Activated CD4-positive, alpha-beta memory T cell treated with anti-CD3 and anti-CD28 coated beads, Interleukin-2, amount 10 ng/mL, durations not matched to agents 7 days and 5 days (primary cell): ENCODE measurements at regions of chr12 and their contacts with region 1.

Region 1: DNA sequence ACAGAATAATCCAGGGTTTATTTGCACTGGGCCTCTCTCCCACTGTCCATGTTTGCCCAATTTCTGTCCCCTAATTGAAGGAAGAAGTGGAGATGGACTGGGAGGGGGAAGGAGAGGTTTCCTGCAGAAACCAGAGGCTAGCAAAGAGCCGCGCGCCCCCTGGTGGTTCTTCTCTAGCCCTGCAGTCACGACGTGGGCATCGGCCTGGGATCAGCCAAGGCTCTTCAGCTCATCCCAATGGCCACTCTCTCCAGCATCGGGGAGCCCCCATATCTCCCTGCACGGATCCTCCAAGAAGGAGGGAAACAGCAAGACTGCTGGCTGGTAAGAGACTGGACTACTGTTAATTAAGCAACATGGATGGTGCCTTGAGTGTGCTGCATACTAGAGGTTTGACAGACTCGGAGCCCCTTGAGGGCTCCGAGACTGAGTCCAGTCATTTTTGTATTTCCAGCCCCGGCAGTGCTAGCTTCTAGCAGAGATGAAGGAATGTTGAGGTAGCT is 18.7 kb downstream of the ZBTB39 start:
- DNase-seq: peak; percentile 78
- H3K4me3 Mint-ChIP-seq: no peak overlapping the region
- H3K27ac Mint-ChIP-seq: no peak overlapping the region
- H3K4me1 Mint-ChIP-seq: peaks cover 23% of the 10 kb centered on the region
- H3K27me3 Mint-ChIP-seq: peaks cover 6% of the 10 kb centered on the region

Region 2: GRCh38 chr12:56759263-56759908 is 228.2 kb before region 1 on chr12:
- CTCF ChIA-PET with region 1: interaction called, 53 read pairs
- POLR2A ChIA-PET with region 1: no interaction called
- DNase-seq: no peak
- H3K4me3 Mint-ChIP-seq: no peak overlapping the region
- H3K27ac Mint-ChIP-seq: no peak overlapping the region
- H3K4me1 Mint-ChIP-seq: peaks cover 17% of the 10 kb centered on the region
- H3K27me3 Mint-ChIP-seq: peaks cover 4% of the 10 kb centered on the region

Region 3: DNA sequence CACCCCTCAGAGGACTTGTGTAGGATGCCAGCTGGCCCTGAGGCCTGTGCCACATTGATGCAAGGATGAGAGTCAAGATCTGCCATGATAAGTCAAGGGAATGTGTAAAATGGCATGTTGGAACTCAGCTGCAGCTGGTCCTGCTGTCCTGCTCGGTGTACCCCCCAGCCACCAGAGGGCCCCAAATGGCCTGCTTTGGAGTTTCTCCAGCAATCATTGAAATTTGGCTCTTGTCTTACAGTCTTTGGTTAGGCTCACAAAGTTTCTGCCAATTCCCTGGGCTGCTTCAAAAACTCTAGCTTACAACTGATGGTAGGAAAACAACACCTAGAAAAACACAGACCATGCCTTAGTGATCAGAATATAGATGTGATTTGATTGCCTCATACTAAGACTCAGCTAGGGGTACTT is 147.7 kb before region 1 on chr12:
- CTCF ChIA-PET with region 1: interaction called, 11 read pairs
- POLR2A ChIA-PET with region 1: no interaction called
- DNase-seq: peak; percentile 38
- H3K4me3 Mint-ChIP-seq: no peak overlapping the region
- H3K27ac Mint-ChIP-seq: no peak overlapping the region
- H3K4me1 Mint-ChIP-seq: peaks cover 19% of the 10 kb centered on the region
- H3K27me3 Mint-ChIP-seq: peaks cover 4% of the 10 kb centered on the region